Endothelial cell of umbilical vein (primary cell): ENCODE measurements at regions of chr12 and their contacts with region 1.

Region 1: DNA sequence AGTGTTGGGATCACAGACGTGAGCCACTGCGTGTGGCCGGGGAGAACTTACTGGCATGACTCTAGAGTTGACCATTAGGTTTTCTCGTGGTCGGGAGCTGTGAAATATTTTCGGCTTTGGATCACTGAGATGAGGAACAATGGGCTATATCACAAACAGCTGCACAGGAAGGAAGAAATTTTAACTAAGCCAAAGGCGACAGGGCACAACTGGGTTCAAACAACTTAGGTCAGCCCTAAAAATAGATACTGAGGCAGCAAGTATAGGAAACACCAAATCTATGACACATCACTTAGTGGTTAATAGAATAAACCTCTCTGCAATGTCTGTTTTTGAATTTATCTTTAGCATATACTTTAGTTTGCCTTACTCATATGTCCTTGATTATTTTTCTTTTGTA is 162.9 kb downstream of the LRIG3 start:
- DNase-seq: peak; percentile 89
- H3K4me3 ChIP-seq: no peak overlapping the region
- H3K27ac ChIP-seq: peak overlapping the region; percentile 87
- H3K4me1 ChIP-seq: peaks cover 16% of the 10 kb centered on the region
- H3K27me3 ChIP-seq: no peaks in the 10 kb centered on the region
- CTCF ChIP-seq: no peak
- POLR2A ChIP-seq: no peak

Region 2: GRCh38 chr12:58557171-58557570 is 200.3 kb before region 1 on chr12:
- CTCF ChIA-PET with region 1: no interaction called
- POLR2A ChIA-PET with region 1: no interaction called
- dilution Hi-C with region 1: no loop called
- intact Hi-C with region 1: loop called (anchors 1 kb)
- DNase-seq: peak; percentile 95
- H3K4me3 ChIP-seq: no peak overlapping the region
- H3K27ac ChIP-seq: peak overlapping the region; percentile 87
- H3K4me1 ChIP-seq: peaks cover 13% of the 10 kb centered on the region
- H3K27me3 ChIP-seq: no peaks in the 10 kb centered on the region
- CTCF ChIP-seq: no peak
- POLR2A ChIP-seq: peak; percentile 23